ENCODE measurements at regions of chr11 and their contacts with region 1.

Region 1: GRCh38 chr11:9384535-9385303 is at the start of gene IPO7:
- DNase-seq: peak; percentile 92
- H3K4me3 Mint-ChIP-seq: peak within 1 kb of the TSS; percentile 85
- H3K27ac Mint-ChIP-seq: peak within 1 kb of the TSS; percentile 87
- H3K4me1 Mint-ChIP-seq: peaks cover 32% of the 10 kb centered on the region
- H3K27me3 Mint-ChIP-seq: no peaks in the 10 kb centered on the region
- total RNA-seq, gene IPO7: 87.4 to 95.7 TPM

Region 2: GRCh38 chr11:9314291-9315036 is 70.3 kb before region 1 on chr11 and contains the start of gene TMEM41B:
- CTCF ChIA-PET with region 1: interaction called, 7 read pairs
- POLR2A ChIA-PET with region 1: interaction called, 40 read pairs
- DNase-seq: peak; percentile 99
- H3K4me3 Mint-ChIP-seq: peak within 1 kb of the TSS; percentile 92
- H3K27ac Mint-ChIP-seq: peak within 1 kb of the TSS; percentile 91
- H3K4me1 Mint-ChIP-seq: peaks cover 36% of the 10 kb centered on the region
- H3K27me3 Mint-ChIP-seq: peaks cover 21% of the 10 kb centered on the region
- total RNA-seq, gene TMEM41B: 43.3 to 49.0 TPM

Region 3: DNA sequence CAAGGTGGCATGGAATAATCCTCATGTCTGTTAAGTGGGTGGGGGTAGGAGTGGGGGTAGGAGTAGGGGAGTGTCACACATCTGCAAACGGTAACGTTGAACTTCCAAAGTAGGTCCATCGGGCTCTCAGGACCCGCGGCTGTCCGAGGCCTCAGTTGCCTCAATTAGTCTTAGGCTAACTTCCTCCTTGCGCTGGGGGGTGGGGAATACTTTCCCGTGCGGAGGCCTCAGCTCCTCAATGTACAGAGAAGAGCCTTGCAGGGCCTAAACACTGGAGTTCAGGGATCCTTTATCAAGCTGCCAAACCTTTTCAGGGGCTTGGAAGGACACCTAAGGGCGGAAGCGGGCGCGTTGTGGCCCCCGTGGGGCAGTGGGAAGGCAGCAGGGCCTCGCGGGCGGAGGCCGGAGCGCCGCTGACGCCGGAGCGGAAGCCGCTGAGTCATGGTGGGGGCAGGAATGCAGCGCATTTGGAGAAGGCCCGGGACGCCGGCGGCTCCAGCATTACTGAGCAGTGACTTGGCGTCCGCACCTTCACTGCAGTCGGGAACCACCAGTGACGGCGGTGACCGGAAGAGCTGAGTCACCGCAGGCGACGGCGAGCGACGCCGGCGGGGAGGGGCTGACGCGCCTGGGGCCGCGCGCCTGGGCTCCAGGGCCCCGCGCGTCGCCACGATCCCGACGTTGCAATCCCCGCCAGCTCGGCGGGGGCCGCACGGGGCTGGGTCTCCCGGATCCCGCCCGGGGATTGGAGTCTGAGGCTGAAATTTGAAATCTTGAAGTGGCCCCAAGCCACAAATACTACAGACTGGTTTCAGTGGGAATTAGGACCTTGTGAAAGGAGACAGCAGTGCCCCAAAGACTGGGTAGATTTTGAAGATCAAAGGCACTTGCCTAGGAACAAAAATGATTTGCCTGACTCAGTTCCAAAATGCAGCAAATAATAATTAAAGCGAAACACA is 20.5 kb before region 1 on chr11:
- CTCF ChIA-PET with region 1: interaction called, 7 read pairs
- POLR2A ChIA-PET with region 1: interaction called, 15 read pairs
- DNase-seq: peak; percentile 84
- H3K4me3 Mint-ChIP-seq: peak overlapping the region; percentile 73
- H3K27ac Mint-ChIP-seq: peak overlapping the region; percentile 79
- H3K4me1 Mint-ChIP-seq: peaks cover 35% of the 10 kb centered on the region
- H3K27me3 Mint-ChIP-seq: no peaks in the 10 kb centered on the region

Region 4: GRCh38 chr11:9396752-9397151 is 12.0 kb after region 1 on chr11:
- CTCF ChIA-PET with region 1: interaction called, 6 read pairs
- POLR2A ChIA-PET with region 1: interaction called, 18 read pairs
- DNase-seq: no peak
- H3K4me3 Mint-ChIP-seq: no peak overlapping the region
- H3K27ac Mint-ChIP-seq: peak overlapping the region; percentile 41
- H3K4me1 Mint-ChIP-seq: peaks cover 49% of the 10 kb centered on the region
- H3K27me3 Mint-ChIP-seq: no peaks in the 10 kb centered on the region

Region 5: DNA sequence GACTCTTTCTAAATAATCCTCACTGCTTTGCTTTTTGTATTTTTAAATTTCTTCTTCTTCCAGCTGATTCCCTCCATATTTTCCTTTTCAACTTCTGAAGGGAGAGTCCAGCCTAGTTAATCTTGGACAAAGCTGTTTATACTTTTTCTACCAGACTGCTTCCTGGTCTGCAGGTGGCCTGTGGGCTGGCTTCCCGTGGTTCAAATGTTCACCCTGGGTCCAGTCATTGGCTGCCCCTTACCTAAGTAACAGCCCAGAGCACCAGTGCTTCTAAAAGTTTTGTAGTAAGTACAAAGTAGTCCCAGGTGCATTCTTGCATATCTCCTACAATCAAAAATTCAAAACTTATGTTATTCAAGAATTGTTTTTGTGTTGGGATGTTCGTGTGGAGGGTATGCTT is 95.2 kb after region 1 on chr11:
- CTCF ChIA-PET with region 1: no interaction called
- POLR2A ChIA-PET with region 1: no interaction called
- DNase-seq: no peak
- H3K4me3 Mint-ChIP-seq: no peak overlapping the region
- H3K27ac Mint-ChIP-seq: no peak overlapping the region
- H3K4me1 Mint-ChIP-seq: peaks cover 1% of the 10 kb centered on the region
- H3K27me3 Mint-ChIP-seq: no peaks in the 10 kb centered on the region

Region 6: GRCh38 chr11:9573052-9573774 is 188.5 kb after region 1 on chr11 and contains the start of gene WEE1:
- CTCF ChIA-PET with region 1: no interaction called
- POLR2A ChIA-PET with region 1: interaction called, 12 read pairs
- DNase-seq: peak; percentile 98
- H3K4me3 Mint-ChIP-seq: peak within 1 kb of the TSS; percentile 98
- H3K27ac Mint-ChIP-seq: peak within 1 kb of the TSS; percentile 83
- H3K4me1 Mint-ChIP-seq: peaks cover 37% of the 10 kb centered on the region
- H3K27me3 Mint-ChIP-seq: peaks cover 2% of the 10 kb centered on the region
- total RNA-seq, gene WEE1: 62.8 to 64.1 TPM